GM12878 (cell line): ENCODE measurements at regions of chr4 and their contacts with region 1.

Region 1: DNA sequence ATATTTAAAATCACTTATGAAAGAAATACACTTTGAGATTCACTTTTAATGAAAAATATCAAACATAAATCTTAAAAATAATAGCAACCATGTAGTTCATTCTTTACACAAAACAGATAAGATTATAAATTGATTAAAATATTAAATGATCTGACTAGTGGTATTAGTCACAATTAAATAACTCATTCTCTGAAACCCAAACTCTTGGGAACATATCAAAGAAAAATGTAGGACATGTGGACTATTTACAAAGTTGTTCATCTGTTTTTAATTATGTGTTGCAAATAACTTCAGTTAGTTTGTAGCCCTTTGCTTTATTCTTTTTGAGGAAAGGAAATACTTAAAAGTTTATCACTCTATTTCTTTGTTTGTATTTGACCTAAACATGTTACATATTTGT is 9.5 kb upstream of the GUCY1A1 start:
- DNase-seq: no peak
- ATAC-seq: no peak
- H3K4me3 ChIP-seq: no peak overlapping the region
- H3K27ac ChIP-seq: no peak overlapping the region
- H3K4me1 ChIP-seq: no peaks in the 10 kb centered on the region
- H3K27me3 ChIP-seq: 0 out of 4 replicates have a peak, but pooled peaks cover 0 to 2% of the 10 kb centered on the region in 2 experiments
- CTCF ChIP-seq: no peak
- EP300 ChIP-seq: no peak
- POLR2A ChIP-seq: no peak
- RAD21 ChIP-seq: no peak

Region 2: GRCh38 chr4:155497306-155497705 is 159.9 kb before region 1 on chr4:
- CTCF ChIA-PET with region 1: no interaction called
- POLR2A ChIA-PET with region 1: no interaction called
- RAD21 ChIA-PET with region 1: no interaction called
- SMC1A ChIA-PET with region 1: no interaction called
- in situ Hi-C with region 1: no loop called
- intact Hi-C with region 1: no loop called
- DNase-seq: no peak
- ATAC-seq: peak; percentile 42; the same call in 1 of the 3 replicates
- H3K4me3 ChIP-seq: no peak overlapping the region
- H3K27ac ChIP-seq: no peak overlapping the region
- H3K4me1 ChIP-seq: no peaks in the 10 kb centered on the region
- H3K27me3 ChIP-seq: no peaks in the 10 kb centered on the region
- CTCF ChIP-seq: no peak
- EP300 ChIP-seq: no peak
- POLR2A ChIP-seq: no peak
- RAD21 ChIP-seq: no peak

Region 3: DNA sequence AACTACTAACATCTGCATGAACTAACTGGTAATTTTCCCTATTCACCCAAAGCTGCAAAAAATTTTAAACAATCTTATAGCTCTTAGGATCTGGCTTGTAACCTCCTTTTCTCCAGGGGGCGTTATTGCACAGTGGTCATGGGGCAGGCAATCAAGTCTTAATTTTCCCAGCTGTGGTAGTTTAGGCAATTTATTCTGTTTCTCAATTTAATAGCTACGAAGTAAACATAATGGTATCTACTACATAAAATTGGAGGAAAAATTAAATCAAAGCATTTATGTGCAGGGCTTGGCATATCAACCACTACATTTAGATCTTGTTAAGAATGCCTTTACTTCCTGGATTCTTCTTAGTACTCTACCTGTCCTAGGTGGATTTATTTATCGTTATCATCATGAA is 127.9 kb before region 1 on chr4:
- CTCF ChIA-PET with region 1: interaction called, 16 read pairs
- POLR2A ChIA-PET with region 1: interaction called, 5 read pairs
- RAD21 ChIA-PET with region 1: interaction called, 35 read pairs
- SMC1A ChIA-PET with region 1: interaction called, 22 read pairs
- in situ Hi-C with region 1: no loop called
- intact Hi-C with region 1: no loop called
- DNase-seq: no peak
- ATAC-seq: peak; percentile 71
- H3K4me3 ChIP-seq: no peak overlapping the region
- H3K27ac ChIP-seq: no peak overlapping the region
- H3K4me1 ChIP-seq: no peaks in the 10 kb centered on the region
- H3K27me3 ChIP-seq: peaks cover 0 to 3% of the 10 kb centered on the region in 2 experiments; a peak in 1 of 4 replicates
- CTCF ChIP-seq: peak; percentile 13 to 55 (median 20); a peak in 3 of 6 replicates
- EP300 ChIP-seq: no peak
- POLR2A ChIP-seq: no peak
- RAD21 ChIP-seq: peak; percentile 51

Region 4: DNA sequence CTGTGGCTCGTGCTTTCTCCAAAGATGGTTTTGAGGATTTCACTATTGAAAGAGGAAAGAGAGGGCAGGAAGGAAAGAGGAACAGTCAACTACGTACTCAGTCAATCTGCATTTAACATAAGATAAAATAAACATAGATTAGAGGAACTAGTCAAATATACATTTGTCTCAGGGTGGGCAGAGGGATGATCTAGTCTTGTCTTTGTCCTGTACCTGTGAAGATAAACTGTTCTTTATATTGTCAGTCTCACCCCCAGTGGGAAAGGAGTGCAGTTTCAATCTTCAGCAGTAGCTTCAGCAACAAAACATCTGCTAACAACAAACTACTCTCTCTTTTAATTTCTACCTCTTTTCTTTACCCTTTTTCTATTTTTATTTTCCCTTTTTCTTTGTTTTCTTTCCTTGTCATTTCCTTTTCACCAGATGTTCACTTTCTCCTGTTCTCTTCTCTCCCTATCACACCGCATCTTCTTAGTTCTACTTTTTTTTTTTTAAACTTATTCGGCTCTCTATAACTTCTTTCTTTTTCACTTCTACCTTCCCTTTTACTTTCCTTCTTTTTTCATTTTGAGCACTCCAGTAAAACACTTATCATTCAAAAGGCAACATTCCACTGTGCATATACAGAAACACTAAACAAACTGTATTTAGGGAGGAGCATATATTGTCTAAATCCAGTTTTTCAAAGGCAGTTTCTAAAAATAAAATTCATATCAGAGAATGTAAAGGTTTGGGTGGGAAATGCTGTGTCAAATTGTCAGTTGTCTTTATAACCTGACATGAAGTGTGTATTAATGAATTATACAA is 41.9 kb before region 1 on chr4:
- CTCF ChIA-PET with region 1: interaction called, 14 read pairs
- POLR2A ChIA-PET with region 1: interaction called, 16 read pairs
- RAD21 ChIA-PET with region 1: interaction called, 8 read pairs
- SMC1A ChIA-PET with region 1: interaction called, 19 read pairs
- in situ Hi-C with region 1: no loop called
- intact Hi-C with region 1: no loop called
- DNase-seq: no peak
- ATAC-seq: peak; percentile 70
- H3K4me3 ChIP-seq: no peak overlapping the region
- H3K27ac ChIP-seq: no peak overlapping the region
- H3K4me1 ChIP-seq: no peaks in the 10 kb centered on the region
- H3K27me3 ChIP-seq: no peaks in the 10 kb centered on the region; a peak in 1 of 4 replicates
- CTCF ChIP-seq: no peak
- EP300 ChIP-seq: no peak
- POLR2A ChIP-seq: no peak
- RAD21 ChIP-seq: no peak

Region 5: GRCh38 chr4:155639704-155640523 is 17.3 kb before region 1 on chr4:
- CTCF ChIA-PET with region 1: interaction called, 12 read pairs
- POLR2A ChIA-PET with region 1: interaction called, 23 read pairs
- RAD21 ChIA-PET with region 1: interaction called, 32 read pairs
- SMC1A ChIA-PET with region 1: interaction called, 26 read pairs
- in situ Hi-C with region 1: no loop called
- intact Hi-C with region 1: no loop called
- DNase-seq: peak; percentile 45
- ATAC-seq: peak; percentile 85
- H3K4me3 ChIP-seq: no peak overlapping the region
- H3K27ac ChIP-seq: no peak overlapping the region
- H3K4me1 ChIP-seq: peaks cover 7% of the 10 kb centered on the region
- H3K27me3 ChIP-seq: no peaks in the 10 kb centered on the region
- CTCF ChIP-seq: no peak
- EP300 ChIP-seq: no peak
- POLR2A ChIP-seq: no peak
- RAD21 ChIP-seq: no peak

Region 6: DNA sequence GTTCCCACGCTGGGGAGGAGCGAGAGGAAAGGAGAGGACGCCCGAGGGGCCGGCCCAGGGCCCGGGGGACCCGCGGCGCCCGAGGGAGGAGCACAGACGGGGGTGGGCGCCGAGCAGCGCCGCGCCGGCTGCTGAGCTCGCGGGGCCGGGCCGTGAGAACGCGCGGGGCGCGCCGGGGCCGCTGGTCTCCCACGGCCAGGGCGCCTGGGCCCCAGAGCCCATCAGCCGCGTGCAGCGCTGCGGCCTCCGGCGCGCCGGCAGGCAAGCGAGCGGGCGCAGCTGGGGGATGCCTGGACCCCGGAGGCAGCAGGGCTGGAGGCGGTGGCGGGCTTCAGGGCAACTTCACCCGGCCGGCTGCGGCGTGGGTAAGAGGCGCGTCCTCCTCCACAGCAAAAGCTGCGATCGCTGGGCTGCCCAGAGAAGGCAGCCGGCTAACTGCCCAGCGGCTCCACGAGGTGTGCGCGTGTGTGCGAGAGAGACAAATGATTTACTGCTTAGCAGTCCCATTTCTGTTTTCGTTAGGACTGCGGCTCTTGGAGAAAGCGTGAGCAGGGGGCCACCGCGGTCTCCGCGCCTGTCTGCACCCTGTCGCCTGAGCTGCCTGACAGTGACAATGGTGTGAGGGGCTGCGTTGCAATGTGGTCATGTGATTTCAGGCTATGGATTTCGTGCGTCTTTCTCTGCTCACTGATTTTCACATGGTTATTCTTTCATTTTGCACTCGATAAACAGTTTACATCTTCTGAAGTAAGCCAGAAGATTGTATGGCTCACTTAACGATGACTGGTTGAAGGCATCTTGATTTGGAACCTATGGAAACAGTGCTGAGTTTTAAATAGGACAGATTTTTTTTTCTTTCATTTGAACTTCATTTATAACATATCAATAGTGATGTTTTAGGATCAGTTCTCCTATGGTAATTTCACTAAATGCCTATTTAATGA is 10.7 kb after region 1 on chr4:
- CTCF ChIA-PET with region 1: interaction called, 10 read pairs
- POLR2A ChIA-PET with region 1: interaction called, 11 read pairs
- RAD21 ChIA-PET with region 1: interaction called, 41 read pairs
- SMC1A ChIA-PET with region 1: interaction called, 42 read pairs
- in situ Hi-C with region 1: no loop called
- intact Hi-C with region 1: no loop called
- DNase-seq: no peak
- ATAC-seq: peak; percentile 71
- H3K4me3 ChIP-seq: peak overlapping the region; percentile 41
- H3K27ac ChIP-seq: no peak overlapping the region
- H3K4me1 ChIP-seq: no peaks in the 10 kb centered on the region; the same call in 1 of the 2 replicates
- H3K27me3 ChIP-seq: peaks cover 4 to 21% of the 10 kb centered on the region in 2 experiments; a peak in 3 of 4 replicates
- CTCF ChIP-seq: no peak
- EP300 ChIP-seq: no peak
- POLR2A ChIP-seq: peak; percentile 41; the same call in 1 of the 2 replicates
- RAD21 ChIP-seq: no peak

Region 7: DNA sequence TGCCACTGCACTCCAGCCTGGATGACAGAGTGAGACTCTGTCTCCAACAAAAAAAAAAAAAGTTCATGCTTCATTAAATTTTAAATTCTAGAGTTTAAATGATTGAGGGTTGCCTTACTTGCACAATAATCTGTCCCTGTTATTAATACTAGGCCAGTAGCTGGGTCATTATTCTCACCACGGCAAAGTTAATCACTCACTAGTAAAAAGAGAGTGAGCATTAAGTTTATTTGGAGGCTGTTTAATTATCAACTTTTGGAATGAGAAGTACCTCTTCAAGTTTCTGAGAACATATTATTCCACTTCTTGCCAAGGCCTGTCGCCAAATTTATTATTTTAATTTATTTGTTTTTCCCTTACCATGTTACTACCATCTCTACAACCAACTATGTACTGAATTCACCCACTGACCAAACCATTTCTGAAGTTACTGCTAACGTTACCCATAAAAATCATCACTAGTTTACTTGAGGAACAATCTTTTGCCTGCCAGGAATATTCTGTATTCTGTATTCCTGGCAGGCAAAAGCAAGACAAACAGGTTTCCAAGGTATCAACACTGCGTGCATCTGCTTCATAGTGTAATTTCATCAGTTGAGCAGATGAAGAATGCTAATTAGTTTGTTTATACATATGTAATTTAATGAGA is 36.0 kb after region 1 on chr4:
- CTCF ChIA-PET with region 1: interaction called, 4 read pairs
- POLR2A ChIA-PET with region 1: no interaction called
- RAD21 ChIA-PET with region 1: interaction called, 5 read pairs
- SMC1A ChIA-PET with region 1: interaction called, 24 read pairs
- in situ Hi-C with region 1: no loop called
- intact Hi-C with region 1: no loop called
- DNase-seq: no peak
- ATAC-seq: peak; percentile 25; the same call in 2 of the 3 replicates
- H3K4me3 ChIP-seq: no peak overlapping the region
- H3K27ac ChIP-seq: no peak overlapping the region
- H3K4me1 ChIP-seq: no peaks in the 10 kb centered on the region
- H3K27me3 ChIP-seq: no peaks in the 10 kb centered on the region
- CTCF ChIP-seq: no peak
- EP300 ChIP-seq: no peak
- POLR2A ChIP-seq: no peak
- RAD21 ChIP-seq: no peak

Region 8: DNA sequence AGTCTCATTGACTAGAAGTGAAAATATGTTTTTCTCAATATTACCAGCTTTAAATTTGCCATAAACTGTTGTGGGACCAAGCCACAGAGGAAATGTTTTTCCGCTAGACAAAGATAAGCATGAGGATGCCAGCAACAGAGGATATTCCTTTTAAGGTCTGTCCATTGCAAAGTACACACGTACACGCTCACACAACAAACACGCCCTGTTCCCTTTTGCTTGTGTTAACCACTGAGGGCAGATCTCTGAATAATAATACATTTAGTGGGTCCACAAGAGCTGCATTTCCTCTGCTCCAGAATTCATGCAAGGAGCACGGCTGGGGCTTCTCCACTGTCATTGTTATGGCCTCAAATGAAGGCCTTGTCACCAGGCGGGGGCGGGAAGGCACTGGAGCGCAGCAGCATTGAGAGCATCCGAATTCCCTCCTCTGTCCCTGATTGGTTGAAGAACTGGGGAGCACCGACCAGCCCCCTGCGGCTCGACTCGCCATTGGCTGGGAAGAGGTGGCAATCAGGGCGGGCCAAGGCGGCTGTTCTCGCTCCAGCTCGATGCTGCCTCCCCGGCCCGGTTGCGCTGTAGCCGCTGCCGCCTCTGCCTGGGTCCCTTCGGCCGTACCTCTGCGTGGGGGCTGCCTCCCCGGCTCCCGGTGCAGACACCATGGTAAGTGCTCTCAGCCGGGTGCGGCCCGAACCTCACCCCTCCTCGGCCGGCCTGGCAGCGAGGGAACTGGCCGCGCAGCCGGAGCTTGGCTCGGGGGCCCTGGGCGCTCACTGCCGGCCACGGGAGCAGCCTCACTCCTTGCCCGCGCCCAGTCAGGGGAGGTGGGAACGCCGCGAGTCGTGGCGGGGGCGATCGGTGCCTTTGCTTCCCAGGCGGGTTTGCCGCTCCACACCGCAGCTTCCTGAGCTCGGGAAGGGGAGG is 101.6 kb after region 1 on chr4 and contains the start of gene GUCY1B1:
- CTCF ChIA-PET with region 1: interaction called, 7 read pairs
- POLR2A ChIA-PET with region 1: interaction called, 16 read pairs
- RAD21 ChIA-PET with region 1: interaction called, 22 read pairs
- SMC1A ChIA-PET with region 1: interaction called, 22 read pairs
- in situ Hi-C with region 1: no loop called
- intact Hi-C with region 1: no loop called
- DNase-seq: peak; percentile 44
- ATAC-seq: peak; percentile 96
- H3K4me3 ChIP-seq: 0 out of 2 replicates have a peak within 1 kb of the TSS, but pooled peaks have one; percentile 44
- H3K27ac ChIP-seq: no peak within 1 kb of the TSS
- H3K4me1 ChIP-seq: no peaks in the 10 kb centered on the region
- H3K27me3 ChIP-seq: peaks cover 0 to 7% of the 10 kb centered on the region in 2 experiments; a peak in 2 of 4 replicates
- CTCF ChIP-seq: peak; percentile 13 to 40 (median 24); a peak in 4 of 6 replicates
- EP300 ChIP-seq: 0 out of 4 replicates have a peak, but pooled peaks of 1 of the 2 experiments have one; percentile 13
- POLR2A ChIP-seq: peak; percentile 61; the same call in 1 of the 2 replicates
- RAD21 ChIP-seq: no peak
- polyA plus RNA-seq, gene GUCY1B1: 0.60 to 1.1 TPM

Region 9: DNA sequence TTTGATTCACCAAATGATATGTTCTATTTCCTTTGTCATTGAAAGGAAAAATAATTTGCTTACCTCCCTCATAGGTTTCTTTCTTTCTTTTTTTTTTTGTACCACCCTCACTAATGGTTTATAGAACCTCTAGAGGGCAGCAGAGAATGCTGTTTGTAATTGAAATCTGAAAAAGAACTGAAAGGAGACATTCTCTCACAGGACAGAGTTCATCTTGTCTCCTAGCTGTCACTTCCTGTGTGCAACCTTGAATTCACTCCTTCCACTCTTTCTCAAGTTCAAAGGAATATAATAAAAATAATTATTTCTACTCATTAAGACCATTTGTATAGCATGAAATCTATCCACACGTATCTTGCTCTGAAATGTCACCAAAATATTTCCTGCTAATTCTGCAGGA is 152.7 kb after region 1 on chr4:
- CTCF ChIA-PET with region 1: no interaction called
- POLR2A ChIA-PET with region 1: no interaction called
- RAD21 ChIA-PET with region 1: no interaction called
- SMC1A ChIA-PET with region 1: no interaction called
- in situ Hi-C with region 1: no loop called
- intact Hi-C with region 1: no loop called
- DNase-seq: peak; percentile 55
- ATAC-seq: peak; percentile 99
- H3K4me3 ChIP-seq: no peak overlapping the region
- H3K27ac ChIP-seq: no peak overlapping the region
- H3K4me1 ChIP-seq: no peaks in the 10 kb centered on the region
- H3K27me3 ChIP-seq: no peaks in the 10 kb centered on the region
- CTCF ChIP-seq: peak; percentile 40 to 69 (median 54); a peak in 5 of 6 replicates
- EP300 ChIP-seq: no peak
- POLR2A ChIP-seq: no peak
- RAD21 ChIP-seq: peak; percentile 81